Endothelial cell of umbilical vein (primary cell): ENCODE measurements at regions of chr15 and their contacts with region 1.

Region 1: DNA sequence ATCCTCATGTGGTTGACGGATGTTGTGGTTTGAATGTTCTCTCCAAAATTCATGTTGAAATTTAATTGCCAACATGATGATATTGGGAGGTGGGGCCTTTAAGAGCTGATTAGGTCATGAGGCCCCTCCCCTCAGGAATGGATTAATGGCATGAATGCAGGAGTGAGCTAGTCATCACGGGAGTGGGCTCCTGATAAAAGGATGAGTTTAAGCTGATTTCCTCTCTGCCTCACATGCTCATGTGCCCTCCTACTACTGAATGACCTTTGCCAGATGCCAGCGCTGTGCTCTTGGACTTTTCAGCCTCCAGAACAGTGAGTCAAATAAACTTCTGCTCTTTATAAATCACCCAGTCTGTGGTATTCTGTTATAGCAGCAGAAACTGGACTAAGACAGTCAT is 111.2 kb downstream of the MYO5A start:
- DNase-seq: peak; percentile 90
- H3K4me3 ChIP-seq: peak overlapping the region in 2 of 3 experiments; percentile 24 to 59
- H3K27ac ChIP-seq: peak overlapping the region; percentile 97
- H3K4me1 ChIP-seq: peaks cover 67% of the 10 kb centered on the region
- H3K27me3 ChIP-seq: no peaks in the 10 kb centered on the region
- CTCF ChIP-seq: no peak
- POLR2A ChIP-seq: peak; percentile 38

Region 2: GRCh38 chr15:51267703-51268083 is 1149.8 kb before region 1 on chr15:
- CTCF ChIA-PET with region 1: no interaction called
- POLR2A ChIA-PET with region 1: no interaction called
- dilution Hi-C with region 1: no loop called
- intact Hi-C with region 1: no loop called
- DNase-seq: no peak
- H3K4me3 ChIP-seq: no peak overlapping the region
- H3K27ac ChIP-seq: no peak overlapping the region
- H3K4me1 ChIP-seq: no peaks in the 10 kb centered on the region
- H3K27me3 ChIP-seq: peaks cover 66 to 82% of the 10 kb centered on the region in 2 experiments
- CTCF ChIP-seq: no peak
- POLR2A ChIP-seq: no peak

Region 3: GRCh38 chr15:52337198-52337853 is 80.2 kb before region 1 on chr15:
- CTCF ChIA-PET with region 1: no interaction called
- POLR2A ChIA-PET with region 1: no interaction called
- dilution Hi-C with region 1: no loop called
- intact Hi-C with region 1: no loop called
- DNase-seq: peak; percentile 39
- H3K4me3 ChIP-seq: no peak overlapping the region
- H3K27ac ChIP-seq: peak overlapping the region; percentile 34
- H3K4me1 ChIP-seq: peaks cover 3% of the 10 kb centered on the region
- H3K27me3 ChIP-seq: no peaks in the 10 kb centered on the region
- CTCF ChIP-seq: no peak
- POLR2A ChIP-seq: no peak

Region 4: GRCh38 chr15:52362502-52362901 is 55.0 kb before region 1 on chr15:
- CTCF ChIA-PET with region 1: no interaction called
- POLR2A ChIA-PET with region 1: no interaction called
- dilution Hi-C with region 1: no loop called
- intact Hi-C with region 1: no loop called
- DNase-seq: peak; percentile 49
- H3K4me3 ChIP-seq: no peak overlapping the region
- H3K27ac ChIP-seq: no peak overlapping the region
- H3K4me1 ChIP-seq: no peaks in the 10 kb centered on the region
- H3K27me3 ChIP-seq: no peaks in the 10 kb centered on the region
- CTCF ChIP-seq: no peak
- POLR2A ChIP-seq: no peak

Region 5: GRCh38 chr15:52385670-52386069 is 31.9 kb before region 1 on chr15:
- CTCF ChIA-PET with region 1: no interaction called
- POLR2A ChIA-PET with region 1: no interaction called
- dilution Hi-C with region 1: no loop called
- intact Hi-C with region 1: loop called (anchors 2 kb)
- DNase-seq: no peak
- H3K4me3 ChIP-seq: no peak overlapping the region
- H3K27ac ChIP-seq: no peak overlapping the region
- H3K4me1 ChIP-seq: peaks cover 17% of the 10 kb centered on the region
- H3K27me3 ChIP-seq: no peaks in the 10 kb centered on the region
- CTCF ChIP-seq: no peak
- POLR2A ChIP-seq: no peak

Region 6: DNA sequence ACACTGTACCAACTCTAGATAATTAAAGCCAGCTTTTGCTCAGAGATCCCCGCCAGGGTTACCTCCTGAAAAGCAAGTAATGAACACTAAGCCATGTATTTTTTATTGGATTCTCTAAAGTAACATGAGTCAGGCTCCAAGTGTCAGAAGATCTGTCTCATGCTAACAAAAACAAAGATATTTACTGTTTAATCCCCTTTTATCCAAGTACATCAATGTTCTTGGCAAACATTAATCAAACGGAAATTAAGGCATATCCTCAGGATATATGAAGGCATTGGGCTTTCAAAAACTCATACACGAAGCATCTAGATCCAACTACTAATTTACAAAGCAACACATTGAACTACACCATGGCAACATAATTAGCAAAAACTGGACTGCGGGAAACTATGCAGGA is 74.0 kb after region 1 on chr15:
- CTCF ChIA-PET with region 1: no interaction called
- POLR2A ChIA-PET with region 1: no interaction called
- dilution Hi-C with region 1: no loop called
- intact Hi-C with region 1: loop called (anchors 1 kb)
- DNase-seq: peak; percentile 95
- H3K4me3 ChIP-seq: peak overlapping the region in 1 of 3 experiments; percentile 40
- H3K27ac ChIP-seq: peak overlapping the region; percentile 97
- H3K4me1 ChIP-seq: peaks cover 75% of the 10 kb centered on the region
- H3K27me3 ChIP-seq: no peaks in the 10 kb centered on the region
- CTCF ChIP-seq: no peak
- POLR2A ChIP-seq: no peak

Region 7: GRCh38 chr15:52568601-52569256 is 151.2 kb after region 1 on chr15 and contains the start of gene ARPP19:
- CTCF ChIA-PET with region 1: no interaction called
- POLR2A ChIA-PET with region 1: no interaction called
- dilution Hi-C with region 1: no loop called
- intact Hi-C with region 1: loop called (anchors 2 kb)
- DNase-seq: peak; percentile 86
- H3K4me3 ChIP-seq: peak within 1 kb of the TSS; percentile 45 to 79 (median 75)
- H3K27ac ChIP-seq: peak within 1 kb of the TSS; percentile 80
- H3K4me1 ChIP-seq: peaks cover 24% of the 10 kb centered on the region
- H3K27me3 ChIP-seq: no peaks in the 10 kb centered on the region
- CTCF ChIP-seq: no peak
- POLR2A ChIP-seq: peak; percentile 88
- total RNA-seq, gene ARPP19: 176 and 191 TPM in 2 replicates

Region 8: DNA sequence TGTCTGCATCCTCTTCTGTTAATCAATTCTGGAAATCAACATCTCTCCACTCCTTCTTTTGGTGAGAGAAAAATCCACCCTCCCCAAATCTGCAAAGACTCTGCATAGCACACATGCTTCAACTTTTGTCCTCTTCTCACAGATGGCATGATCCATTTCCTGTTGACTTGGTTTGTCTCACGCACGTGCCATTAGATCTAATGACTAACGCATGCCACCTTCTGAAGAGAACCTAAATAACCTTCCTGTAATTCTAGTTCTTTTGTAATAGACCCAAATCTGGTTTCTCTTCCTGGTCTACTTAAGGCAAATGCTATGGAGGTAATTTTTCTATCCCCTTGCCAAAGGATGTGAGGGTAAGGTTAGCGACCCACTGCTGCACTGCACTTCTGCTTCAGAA is 312.7 kb after region 1 on chr15:
- CTCF ChIA-PET with region 1: no interaction called
- POLR2A ChIA-PET with region 1: no interaction called
- dilution Hi-C with region 1: no loop called
- intact Hi-C with region 1: loop called (anchors 2 kb)
- DNase-seq: peak; percentile 92
- H3K4me3 ChIP-seq: no peak overlapping the region
- H3K27ac ChIP-seq: peak overlapping the region; percentile 73
- H3K4me1 ChIP-seq: peaks cover 38% of the 10 kb centered on the region
- H3K27me3 ChIP-seq: no peaks in the 10 kb centered on the region
- CTCF ChIP-seq: no peak
- POLR2A ChIP-seq: no peak